Ovary (tissue), 10 donors: ENCODE measurements at regions of chr9 and their contacts with region 1.

Region 1: GRCh38 chr9:119810645-119811429 is 441.6 kb upstream of the BRINP1 start:
- DNase-seq: no peak
- H3K4me3 ChIP-seq: no peak overlapping the region
- H3K27ac ChIP-seq: no peak overlapping the region
- H3K4me1 ChIP-seq: no peaks in the 10 kb centered on the region
- H3K27me3 ChIP-seq: no peaks in the 10 kb centered on the region
- CTCF ChIP-seq: no peak
- EP300 ChIP-seq: no peak
- POLR2A ChIP-seq: no peak

Region 2: GRCh38 chr9:119487118-119487827 is 323.6 kb before region 1 on chr9:
- intact Hi-C with region 1: no loop called
- DNase-seq: no peak
- H3K4me3 ChIP-seq: no peak overlapping the region
- H3K27ac ChIP-seq: no peak overlapping the region
- H3K4me1 ChIP-seq: no peaks in the 10 kb centered on the region
- H3K27me3 ChIP-seq: no peaks in the 10 kb centered on the region
- CTCF ChIP-seq: no peak
- EP300 ChIP-seq: no peak
- POLR2A ChIP-seq: no peak

Region 3: DNA sequence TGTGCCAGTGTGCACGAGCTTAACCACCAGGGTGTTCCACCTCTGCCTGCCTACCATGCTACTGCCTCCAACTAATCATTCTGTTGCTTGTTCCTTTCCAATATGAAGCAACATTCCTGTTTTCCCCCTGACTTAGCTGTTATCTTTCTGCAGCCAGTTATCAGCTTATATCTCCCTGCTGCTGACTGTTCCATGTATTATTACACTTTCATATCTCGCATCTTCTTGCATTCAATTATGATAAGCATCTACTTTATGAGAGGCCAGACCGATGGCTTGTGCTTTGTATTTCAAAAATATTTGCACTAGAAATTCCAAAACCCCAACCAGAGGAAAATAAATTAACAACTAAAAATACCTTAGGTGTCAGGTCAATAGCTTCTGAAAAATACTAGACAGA is 47.6 kb before region 1 on chr9:
- intact Hi-C with region 1: loop called in 1 of 4 experiments (anchors 1 kb)
- DNase-seq: no peak
- H3K4me3 ChIP-seq: no peak overlapping the region
- H3K27ac ChIP-seq: no peak overlapping the region
- H3K4me1 ChIP-seq: no peaks in the 10 kb centered on the region
- H3K27me3 ChIP-seq: no peaks in the 10 kb centered on the region
- CTCF ChIP-seq: no peak
- EP300 ChIP-seq: no peak
- POLR2A ChIP-seq: no peak